PC-9 (cell line): ENCODE measurements at regions of chr7 and their contacts with region 1.

Region 1: DNA sequence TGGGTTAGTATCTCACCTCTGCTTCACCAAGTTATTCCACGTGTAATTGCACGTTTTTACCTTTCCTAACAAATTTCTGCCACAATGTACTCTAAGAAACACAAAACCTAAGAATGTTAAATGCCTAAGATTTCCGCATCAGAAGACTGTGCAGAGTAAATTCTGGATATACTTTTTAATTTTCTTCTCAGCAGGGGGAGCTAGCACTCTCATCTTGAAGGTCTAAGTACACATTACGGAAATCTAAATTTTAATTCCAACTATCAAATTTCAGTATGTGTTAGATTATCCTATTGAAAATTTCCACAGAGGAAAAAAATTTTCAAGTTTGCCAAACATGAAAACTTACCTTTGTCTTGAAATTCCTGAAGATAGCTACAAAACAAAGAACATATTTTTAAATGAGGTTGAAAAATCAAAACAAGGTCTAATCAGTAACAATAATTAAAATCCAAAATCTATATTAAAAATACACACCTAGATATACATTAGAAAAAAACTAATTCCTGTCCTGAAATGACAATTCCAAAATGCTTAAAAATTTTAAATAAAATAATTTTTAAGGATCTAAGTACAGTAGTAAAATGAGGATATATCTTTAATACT is 10.5 kb downstream of the SKAP2 start:
- DNase-seq: peak in 1 of 2 experiments; percentile 60
- H3K4me3 ChIP-seq: no peak overlapping the region
- H3K27ac ChIP-seq: no peak overlapping the region
- H3K4me1 ChIP-seq: peaks cover 24% of the 10 kb centered on the region
- H3K27me3 ChIP-seq: no peaks in the 10 kb centered on the region
- CTCF ChIP-seq: peak; percentile 90

Region 2: GRCh38 chr7:26787701-26788100 is 66.2 kb before region 1 on chr7:
- CTCF ChIA-PET with region 1: no interaction called
- POLR2A ChIA-PET with region 1: no interaction called
- intact Hi-C with region 1: no loop called
- DNase-seq: no peak
- H3K4me3 ChIP-seq: no peak overlapping the region
- H3K27ac ChIP-seq: no peak overlapping the region
- H3K4me1 ChIP-seq: no peaks in the 10 kb centered on the region
- H3K27me3 ChIP-seq: no peaks in the 10 kb centered on the region
- CTCF ChIP-seq: no peak

Region 3: GRCh38 chr7:26925768-26926167 is 71.9 kb after region 1 on chr7:
- CTCF ChIA-PET with region 1: no interaction called
- POLR2A ChIA-PET with region 1: no interaction called
- intact Hi-C with region 1: no loop called
- DNase-seq: peak in 1 of 2 experiments; percentile 28
- H3K4me3 ChIP-seq: no peak overlapping the region
- H3K27ac ChIP-seq: no peak overlapping the region
- H3K4me1 ChIP-seq: peaks cover 11% of the 10 kb centered on the region; the same call in 1 of the 2 replicates
- H3K27me3 ChIP-seq: no peaks in the 10 kb centered on the region
- CTCF ChIP-seq: no peak

Region 4: DNA sequence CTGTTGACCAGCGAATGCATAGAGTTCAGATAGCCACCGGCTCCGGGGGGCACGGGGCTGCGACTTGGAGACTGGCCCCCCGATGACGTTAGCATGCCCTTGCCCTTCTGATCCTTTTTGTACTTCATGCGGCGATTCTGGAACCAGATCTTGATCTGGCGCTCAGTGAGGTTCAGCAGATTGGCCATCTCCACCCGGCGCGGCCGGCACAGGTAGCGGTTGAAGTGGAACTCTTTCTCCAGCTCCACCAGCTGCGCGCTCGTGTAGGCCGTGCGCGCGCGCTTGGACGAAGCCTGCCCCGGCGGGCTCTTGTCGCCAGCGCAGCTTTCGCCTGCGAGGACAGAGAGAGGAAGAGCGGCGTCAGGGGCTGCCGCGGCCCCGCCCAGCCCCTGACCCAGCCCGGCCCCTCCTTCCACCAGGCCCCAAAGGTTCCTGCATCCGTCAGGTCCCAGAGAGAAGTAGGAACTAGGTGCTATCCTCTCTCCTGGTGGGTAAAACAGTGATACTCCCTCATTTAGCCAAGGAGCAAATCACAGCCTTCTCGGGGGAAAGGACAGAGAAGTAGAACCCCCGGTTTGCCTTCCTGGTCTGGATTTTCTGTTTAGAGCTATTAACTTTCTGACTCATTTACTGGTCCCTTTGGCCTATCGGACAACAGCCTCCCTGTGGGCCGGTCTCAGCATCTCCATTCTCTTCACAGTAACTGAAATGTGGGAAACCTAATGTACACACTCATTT is 254.7 kb after region 1 on chr7:
- CTCF ChIA-PET with region 1: no interaction called
- POLR2A ChIA-PET with region 1: no interaction called
- intact Hi-C with region 1: no loop called
- DNase-seq: no peak
- H3K4me3 ChIP-seq: no peak overlapping the region
- H3K27ac ChIP-seq: 0 out of 2 replicates have a peak overlapping the region, but pooled peaks have one; percentile 4
- H3K4me1 ChIP-seq: peaks cover 29% of the 10 kb centered on the region
- H3K27me3 ChIP-seq: no peaks in the 10 kb centered on the region
- CTCF ChIP-seq: no peak

Region 5: DNA sequence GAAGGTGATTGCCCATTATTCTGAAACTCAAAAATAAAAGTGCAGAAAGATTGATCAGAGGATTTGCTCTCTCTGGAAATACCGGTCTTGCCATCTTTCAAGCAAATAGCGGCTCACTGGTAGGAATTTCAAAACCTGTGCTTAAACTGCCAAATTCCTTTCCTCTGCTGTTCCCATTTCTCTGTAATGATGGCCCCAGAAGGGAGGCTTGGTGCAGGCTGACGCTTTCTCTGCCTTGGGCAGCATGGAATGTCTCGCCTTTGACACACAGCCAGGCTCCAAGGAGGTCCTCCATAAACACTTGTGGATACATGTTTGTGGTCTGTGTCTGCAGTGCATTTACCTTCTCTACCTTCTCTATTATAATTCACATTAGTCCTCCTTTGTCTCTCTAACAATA is 662.0 kb after region 1 on chr7:
- CTCF ChIA-PET with region 1: no interaction called
- POLR2A ChIA-PET with region 1: interaction called, 24 read pairs
- intact Hi-C with region 1: no loop called
- DNase-seq: no peak
- H3K4me3 ChIP-seq: no peak overlapping the region
- H3K27ac ChIP-seq: no peak overlapping the region
- H3K4me1 ChIP-seq: peaks cover 5% of the 10 kb centered on the region; the same call in 1 of the 2 replicates
- H3K27me3 ChIP-seq: no peaks in the 10 kb centered on the region
- CTCF ChIP-seq: no peak